PC-3 (cell line): ENCODE measurements at regions of chr2 and their contacts with region 1.

Region 1: GRCh38 chr2:192559541-192560120 is 364.9 kb upstream of the TMEFF2 start:
- DNase-seq: peak; percentile 19
- ATAC-seq: peak; percentile 79
- H3K4me3 ChIP-seq: no peak overlapping the region
- H3K27ac ChIP-seq: no peak overlapping the region
- H3K4me1 ChIP-seq: no peaks in the 10 kb centered on the region
- H3K27me3 ChIP-seq: no peaks in the 10 kb centered on the region
- CTCF ChIP-seq: no peak

Region 2: DNA sequence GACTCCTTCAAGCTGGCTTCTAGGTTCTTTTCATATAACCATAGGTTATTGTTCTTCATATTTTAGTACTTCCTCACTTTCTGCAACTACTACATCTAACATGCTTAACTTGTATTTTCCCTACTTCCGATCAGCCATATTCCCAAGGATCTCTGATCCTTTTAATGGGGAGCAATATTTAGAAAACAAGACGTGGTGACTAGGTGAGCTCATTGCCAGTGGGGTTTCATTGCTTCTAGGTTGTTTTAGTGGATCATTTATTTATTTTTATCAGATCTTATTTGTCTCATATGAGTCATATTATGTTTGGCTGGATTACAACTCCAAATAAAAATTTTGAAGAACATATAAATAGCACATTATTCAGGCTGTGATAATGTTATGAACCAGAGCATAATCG is 116.0 kb after region 1 on chr2:
- CTCF ChIA-PET with region 1: no interaction called
- POLR2A ChIA-PET with region 1: interaction called, 10 read pairs
- intact Hi-C with region 1: no loop called
- DNase-seq: peak; percentile 57
- ATAC-seq: peak; percentile 95
- H3K4me3 ChIP-seq: no peak overlapping the region
- H3K27ac ChIP-seq: no peak overlapping the region
- H3K4me1 ChIP-seq: no peaks in the 10 kb centered on the region
- H3K27me3 ChIP-seq: no peaks in the 10 kb centered on the region
- CTCF ChIP-seq: no peak